Gastrocnemius medialis (tissue), 4 donors: ENCODE measurements at regions of chr10 and their contacts with region 1.

Region 1: DNA sequence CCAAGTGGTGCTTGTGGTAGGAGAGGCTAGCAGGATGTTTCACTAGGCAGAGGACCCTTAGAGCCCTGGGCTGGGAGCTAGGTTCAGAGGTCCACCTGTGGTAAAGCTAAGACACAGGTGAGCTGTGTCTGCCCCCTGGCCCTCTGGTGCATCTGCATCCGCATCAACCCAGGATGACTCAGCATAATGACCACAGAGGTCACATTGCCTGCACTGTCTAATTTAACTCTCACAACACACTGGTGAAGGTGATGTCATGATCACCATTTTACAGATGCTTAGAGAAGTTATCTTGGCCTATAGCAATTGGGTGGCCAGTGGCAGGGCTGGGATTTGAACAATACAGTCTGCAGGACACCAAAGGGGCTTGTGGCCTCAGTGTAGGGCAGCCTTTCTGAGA is 33.1 kb downstream of the HABP2 start:
- DNase-seq: no peak
- ATAC-seq: peak in 1 of 2 donors; percentile 43
- H3K4me3 ChIP-seq: no peak overlapping the region
- H3K27ac ChIP-seq: peak overlapping the region; percentile 77 to 93 (median 81)
- H3K4me1 ChIP-seq: peaks cover 16 to 29% of the 10 kb centered on the region in 2 donors
- H3K27me3 ChIP-seq: no peaks in the 10 kb centered on the region
- CTCF ChIP-seq: no peak
- POLR2A ChIP-seq: no peak

Region 2: GRCh38 chr10:113666682-113667252 is 80.8 kb after region 1 on chr10:
- in situ Hi-C with region 1: no loop called
- intact Hi-C with region 1: loop called (anchors 2 kb)
- DNase-seq: no peak
- ATAC-seq: no peak
- H3K4me3 ChIP-seq: no peak overlapping the region
- H3K27ac ChIP-seq: peak overlapping the region; percentile 94 to 96 (median 96)
- H3K4me1 ChIP-seq: peaks cover 25 to 33% of the 10 kb centered on the region in 2 donors
- H3K27me3 ChIP-seq: no peaks in the 10 kb centered on the region
- CTCF ChIP-seq: no peak
- POLR2A ChIP-seq: no peak

Region 3: DNA sequence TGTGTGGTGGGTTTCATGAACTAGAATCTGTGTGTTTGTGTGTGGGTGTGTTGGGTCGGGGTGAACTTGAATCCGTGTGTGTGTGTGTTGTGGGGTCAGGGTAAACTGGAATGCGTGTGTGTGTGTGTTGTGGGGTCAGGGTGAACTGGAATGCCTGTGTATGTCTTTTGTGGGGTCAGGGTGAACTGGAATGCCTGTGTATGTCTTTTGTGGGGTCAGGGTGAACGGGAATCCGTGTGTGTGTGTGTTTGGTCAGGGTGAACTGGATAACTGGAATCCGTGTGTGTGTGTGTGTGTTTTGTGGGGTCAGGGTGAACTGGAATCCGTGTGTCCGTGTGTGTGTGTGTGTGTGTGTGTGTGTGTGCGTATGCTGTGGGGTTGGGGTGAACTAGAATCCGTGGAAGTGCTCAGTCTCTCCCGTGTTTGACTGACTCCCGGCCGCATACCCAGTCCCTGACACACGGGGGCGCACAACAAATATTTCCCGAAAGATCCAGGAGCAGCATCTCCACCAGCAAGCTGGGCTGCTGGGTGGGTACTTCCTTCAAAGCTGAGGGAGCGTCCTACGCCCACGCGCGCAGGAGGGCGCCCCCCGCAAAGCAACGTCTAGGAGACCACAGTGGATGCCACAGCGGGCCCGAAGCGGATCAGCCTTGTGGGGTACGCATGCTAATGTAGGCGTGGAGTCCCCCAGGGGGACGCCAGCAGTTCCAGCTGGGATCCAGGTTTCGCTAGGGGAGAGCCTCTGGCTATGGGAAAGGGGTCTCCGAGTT is 92.9 kb after region 1 on chr10:
- in situ Hi-C with region 1: no loop called
- intact Hi-C with region 1: no loop called
- DNase-seq: peak; percentile 65 to 83
- ATAC-seq: peak; percentile 77 to 81
- H3K4me3 ChIP-seq: peak overlapping the region; percentile 88 to 100 (median 95)
- H3K27ac ChIP-seq: peak overlapping the region; percentile 96 to 99 (median 98)
- H3K4me1 ChIP-seq: peaks cover 3 to 16% of the 10 kb centered on the region in 2 donors
- H3K27me3 ChIP-seq: no peaks in the 10 kb centered on the region
- CTCF ChIP-seq: peak; percentile 67 to 77 (median 77)
- POLR2A ChIP-seq: no peak

Region 4: GRCh38 chr10:113879691-113880090 is 293.7 kb after region 1 on chr10:
- in situ Hi-C with region 1: no loop called
- intact Hi-C with region 1: no loop called
- DNase-seq: no peak
- ATAC-seq: no peak
- H3K4me3 ChIP-seq: no peak overlapping the region
- H3K27ac ChIP-seq: no peak overlapping the region
- H3K4me1 ChIP-seq: peaks cover 0 to 5% of the 10 kb centered on the region in 2 donors
- H3K27me3 ChIP-seq: no peaks in the 10 kb centered on the region
- CTCF ChIP-seq: no peak
- POLR2A ChIP-seq: no peak